ENCODE measurements at regions of chr12 and their contacts with region 1.

Region 1: DNA sequence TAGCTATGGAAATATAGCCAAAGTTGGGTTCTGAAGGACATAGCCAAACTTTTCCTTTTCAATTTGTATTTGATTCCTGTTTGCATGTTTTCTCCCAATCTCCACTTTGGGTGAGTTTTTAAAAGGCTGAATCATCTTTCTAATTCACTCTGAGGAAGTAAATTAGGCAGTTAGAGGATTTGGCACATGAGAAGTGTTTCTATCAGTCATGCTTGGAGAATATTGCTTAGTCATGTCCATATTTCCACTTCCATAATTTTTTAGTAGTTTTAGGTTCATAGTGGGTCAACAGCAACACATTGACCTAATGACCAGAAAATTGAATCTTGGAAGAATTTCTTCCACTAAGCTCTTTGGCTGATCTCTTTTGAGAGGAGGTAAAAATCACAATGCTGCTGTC is 21.8 kb downstream of the IRAK3 start:
- DNase-seq: no peak
- H3K4me3 ChIP-seq: no peak overlapping the region
- H3K27ac ChIP-seq: no peak overlapping the region
- H3K4me1 ChIP-seq: no peaks in the 10 kb centered on the region
- H3K27me3 ChIP-seq: no peaks in the 10 kb centered on the region
- CTCF ChIP-seq: no peak
- POLR2A ChIP-seq: no peak

Region 2: DNA sequence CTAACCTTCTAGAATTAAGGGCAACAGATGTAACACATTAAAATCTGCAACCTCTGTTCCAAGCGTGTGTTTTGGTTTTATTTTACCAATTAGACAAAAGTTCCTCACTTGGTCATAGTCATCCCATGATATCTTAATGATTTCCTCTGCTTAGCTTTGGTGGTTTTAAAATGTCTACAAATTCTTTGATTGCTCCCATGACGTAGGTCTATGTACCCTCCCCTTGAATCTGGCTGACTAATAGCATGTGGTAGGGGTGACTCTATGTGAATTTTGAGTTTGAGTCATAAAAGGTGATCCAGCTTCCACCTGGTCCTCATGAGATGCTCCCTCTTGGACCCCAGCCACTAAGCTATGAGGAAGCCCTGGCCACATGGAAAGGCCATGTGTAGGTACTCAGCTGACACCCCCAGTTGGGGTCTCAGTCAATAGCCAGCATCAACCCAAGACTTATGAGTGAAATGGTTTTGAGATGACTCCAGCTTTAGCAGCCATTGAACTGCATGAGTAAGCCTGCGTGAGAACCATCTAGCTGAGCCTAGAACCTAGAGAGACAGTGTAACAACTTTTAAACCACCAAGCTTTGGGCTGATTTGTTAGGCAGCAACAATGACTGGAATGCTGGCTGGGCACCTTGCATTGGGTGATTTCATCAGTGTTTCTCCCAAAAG is 685.2 kb before region 1 on chr12:
- intact Hi-C with region 1: loop called (anchors 5 kb)
- DNase-seq: no peak
- H3K4me3 ChIP-seq: no peak overlapping the region
- H3K27ac ChIP-seq: no peak overlapping the region
- H3K4me1 ChIP-seq: no peaks in the 10 kb centered on the region
- H3K27me3 ChIP-seq: no peaks in the 10 kb centered on the region
- CTCF ChIP-seq: no peak
- POLR2A ChIP-seq: no peak